ENCODE measurements at regions of chr19 and their contacts with region 1.

Region 1: DNA sequence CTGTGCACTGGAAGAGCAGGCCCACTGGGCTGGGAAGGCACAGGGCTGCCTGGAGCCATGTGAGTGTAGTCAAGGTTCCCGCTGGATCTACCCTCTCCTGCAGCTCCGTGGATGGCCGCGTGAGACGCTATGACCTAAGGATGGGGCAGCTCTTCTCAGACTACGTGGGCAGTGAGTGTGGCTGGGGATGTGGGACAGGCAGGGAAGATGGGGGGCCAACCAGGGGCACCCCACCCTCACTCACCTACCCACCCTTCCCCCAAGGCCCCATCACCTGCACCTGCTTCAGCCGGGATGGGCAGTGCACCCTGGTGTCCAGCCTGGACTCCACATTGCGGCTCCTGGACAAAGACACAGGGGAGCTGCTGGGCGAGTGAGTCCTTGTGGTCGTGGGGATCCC is 6.1 kb downstream of the WDR83 start:
- DNase-seq: no peak
- ATAC-seq: no peak
- H3K4me3 ChIP-seq: no peak overlapping the region
- H3K4me3 Mint-ChIP-seq: no peak overlapping the region
- H3K27ac ChIP-seq: no peak overlapping the region
- H3K27ac Mint-ChIP-seq: no peak overlapping the region
- H3K4me1 ChIP-seq: peaks cover 16 to 25% of the 10 kb centered on the region in 2 donors
- H3K4me1 Mint-ChIP-seq: peaks cover 28 to 48% (median 36%) of the 10 kb centered on the region in 7 donors
- H3K27me3 ChIP-seq: no peaks in the 10 kb centered on the region
- H3K27me3 Mint-ChIP-seq: no peaks in the 10 kb centered on the region

Region 2: GRCh38 chr19:12564016-12564664 is 108.6 kb before region 1 on chr19:
- CTCF ChIA-PET with region 1: interaction called, 32 read pairs
- POLR2A ChIA-PET with region 1: interaction called, 5 read pairs
- intact Hi-C with region 1: loop called (anchors 1 kb)
- DNase-seq: peak; percentile 79 to 96 (median 88)
- ATAC-seq: peak; percentile 100
- H3K4me3 ChIP-seq: no peak overlapping the region
- H3K4me3 Mint-ChIP-seq: peak overlapping the region in 1 of 10 donors; percentile 33
- H3K27ac ChIP-seq: no peak overlapping the region
- H3K27ac Mint-ChIP-seq: peak overlapping the region in 2 of 9 donors; percentile 3 to 51
- H3K4me1 ChIP-seq: no peaks in the 10 kb centered on the region
- H3K4me1 Mint-ChIP-seq: peaks cover 0 to 6% (median 5%) of the 10 kb centered on the region in 7 donors
- H3K27me3 ChIP-seq: no peaks in the 10 kb centered on the region
- H3K27me3 Mint-ChIP-seq: no peaks in the 10 kb centered on the region

Region 3: GRCh38 chr19:12696366-12697335 is 23.9 kb after region 1 on chr19 and contains the start of gene FBXW9:
- CTCF ChIA-PET with region 1: interaction called, 3 read pairs
- POLR2A ChIA-PET with region 1: interaction called, 10 read pairs
- intact Hi-C with region 1: no loop called
- DNase-seq: peak; percentile 88 to 97 (median 95)
- ATAC-seq: peak; percentile 97
- H3K4me3 ChIP-seq: peak within 1 kb of the TSS; percentile 98
- H3K4me3 Mint-ChIP-seq: peak within 1 kb of the TSS; percentile 86 to 95 (median 91)
- H3K27ac ChIP-seq: peak within 1 kb of the TSS; percentile 82
- H3K27ac Mint-ChIP-seq: peak within 1 kb of the TSS; percentile 90 to 97 (median 97)
- H3K4me1 ChIP-seq: peaks cover 9 to 11% of the 10 kb centered on the region in 2 donors
- H3K4me1 Mint-ChIP-seq: peaks cover 0 to 15% (median 12%) of the 10 kb centered on the region in 7 donors
- H3K27me3 ChIP-seq: no peaks in the 10 kb centered on the region
- H3K27me3 Mint-ChIP-seq: no peaks in the 10 kb centered on the region
- total RNA-seq, gene FBXW9: 2.5 to 8.6 (median 4.3) TPM